Activated naive CD4-positive, alpha-beta T cell treated with anti-CD3 and anti-CD28 coated beads for 36 hours (primary cell): ENCODE measurements at regions of chr5 and their contacts with region 1.

Region 1: DNA sequence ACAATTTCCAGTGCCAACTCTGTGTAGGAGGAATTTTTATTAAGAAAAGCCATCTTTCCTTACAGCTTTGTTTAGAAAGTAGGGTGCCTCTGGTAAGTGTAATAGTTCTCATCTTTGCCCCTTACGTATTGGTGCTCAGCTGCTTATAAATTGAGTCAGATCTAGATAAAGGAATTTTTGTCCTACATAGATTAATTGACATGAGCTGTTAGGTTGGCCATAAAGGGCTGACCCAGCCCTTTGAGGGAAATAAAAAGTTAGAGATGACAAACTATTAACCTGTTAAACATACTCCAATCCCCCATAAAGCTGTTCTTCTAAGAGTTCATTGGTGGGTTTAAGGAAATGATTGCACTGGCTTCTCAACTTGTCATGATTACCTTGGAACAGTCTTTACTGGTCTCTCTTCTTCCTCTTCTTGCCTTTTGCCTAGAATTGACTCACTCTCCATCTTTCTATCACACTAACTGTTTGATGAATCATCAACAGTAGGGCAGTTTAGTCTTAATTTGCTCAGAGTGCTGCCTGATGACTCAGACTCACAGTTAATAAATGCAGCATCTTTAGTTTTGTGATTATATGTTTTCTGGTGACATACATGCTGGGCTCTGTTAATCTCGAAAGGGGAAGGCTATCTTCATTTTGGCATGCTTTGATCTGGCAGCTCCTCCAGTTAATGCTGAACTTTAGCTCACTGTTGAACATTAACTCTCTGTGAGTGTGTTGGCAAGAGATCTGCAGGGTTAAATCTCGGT is 51.7 kb downstream of the ARHGAP26 start:
- DNase-seq: peak; percentile 49
- H3K4me3 Mint-ChIP-seq: no peak overlapping the region
- H3K27ac Mint-ChIP-seq: peak overlapping the region; percentile 54
- H3K4me1 Mint-ChIP-seq: peaks cover 78% of the 10 kb centered on the region
- H3K27me3 Mint-ChIP-seq: no peaks in the 10 kb centered on the region

Region 2: DNA sequence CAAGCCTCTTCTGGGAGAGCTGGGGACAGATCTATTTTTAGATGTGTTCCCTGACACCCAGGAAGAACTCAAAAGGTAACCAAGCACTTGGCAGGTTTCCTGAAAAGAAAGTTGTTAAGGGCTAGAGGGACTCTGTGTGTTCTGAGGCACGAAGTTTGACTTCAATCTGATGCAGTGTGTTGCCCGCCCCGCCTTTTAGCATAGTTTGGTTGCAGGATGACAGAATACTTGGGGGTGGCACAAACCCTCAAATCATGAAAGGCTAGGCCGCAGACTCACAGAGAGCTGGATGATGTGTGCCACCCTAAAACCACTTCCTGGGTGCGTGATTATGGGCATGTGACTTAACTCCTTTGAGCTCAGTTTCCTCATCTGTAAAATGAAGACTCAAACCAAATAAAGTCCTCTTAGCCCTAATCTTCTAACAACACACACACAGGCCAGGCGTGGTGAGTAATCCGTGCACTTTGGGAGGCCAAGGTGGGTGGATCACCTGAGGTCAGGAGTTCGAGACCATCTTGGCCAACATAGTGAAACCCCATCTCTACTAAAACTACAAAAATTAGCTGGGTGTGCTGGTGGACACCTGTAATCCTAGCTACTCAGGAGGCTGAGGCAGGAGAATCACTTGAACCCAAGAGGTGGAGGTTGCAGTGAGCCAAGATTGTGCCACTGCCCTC is 726.1 kb before region 1 on chr5:
- CTCF ChIA-PET with region 1: no interaction called
- intact Hi-C with region 1: loop called (anchors 10 kb)
- DNase-seq: peak; percentile 95
- H3K4me3 Mint-ChIP-seq: peak overlapping the region; percentile 48
- H3K27ac Mint-ChIP-seq: peak overlapping the region; percentile 96
- H3K4me1 Mint-ChIP-seq: peaks cover 81% of the 10 kb centered on the region
- H3K27me3 Mint-ChIP-seq: no peaks in the 10 kb centered on the region

Region 3: DNA sequence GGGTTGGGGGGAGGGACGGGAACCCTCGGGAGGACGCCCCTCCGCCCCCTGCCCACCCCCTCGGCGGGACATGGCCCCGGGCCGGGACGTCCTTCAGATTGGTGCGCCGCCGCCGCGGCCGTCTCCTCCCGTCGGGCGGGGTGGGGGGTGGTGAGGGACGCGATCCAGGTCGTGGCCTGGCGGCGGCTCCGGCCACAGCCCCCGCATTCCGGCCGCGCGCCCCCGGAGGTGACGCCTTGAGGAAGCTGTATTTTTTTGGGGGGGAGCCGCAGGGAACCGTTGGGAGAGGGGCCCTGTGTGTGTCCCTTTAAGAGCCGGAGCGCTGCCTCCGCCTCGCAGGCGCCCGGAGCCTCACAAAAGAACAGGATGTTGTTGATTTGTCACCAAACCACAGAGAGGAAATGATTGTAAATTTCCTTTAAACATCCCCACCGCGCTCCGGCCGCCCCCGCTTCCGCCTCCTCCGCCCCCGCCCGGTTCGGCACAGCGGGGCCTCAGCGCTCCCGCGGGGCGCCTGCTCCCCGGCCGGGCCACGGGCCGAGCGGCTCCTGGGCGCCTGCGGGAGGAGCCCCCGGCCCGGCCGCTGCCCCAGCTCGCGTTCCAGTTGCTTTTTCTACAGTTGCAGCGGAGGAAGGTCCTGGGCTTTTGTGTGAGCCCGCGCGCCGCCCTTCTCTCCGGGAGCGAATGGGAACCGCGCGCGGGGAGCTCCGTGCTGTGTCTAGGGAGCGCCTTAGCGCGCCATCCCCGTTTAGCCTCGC is 465.0 kb before region 1 on chr5:
- CTCF ChIA-PET with region 1: no interaction called
- intact Hi-C with region 1: loop called (anchors 10 kb)
- DNase-seq: peak; percentile 93
- H3K4me3 Mint-ChIP-seq: peak overlapping the region; percentile 77
- H3K27ac Mint-ChIP-seq: peak overlapping the region; percentile 94
- H3K4me1 Mint-ChIP-seq: peaks cover 52% of the 10 kb centered on the region
- H3K27me3 Mint-ChIP-seq: no peaks in the 10 kb centered on the region

Region 4: DNA sequence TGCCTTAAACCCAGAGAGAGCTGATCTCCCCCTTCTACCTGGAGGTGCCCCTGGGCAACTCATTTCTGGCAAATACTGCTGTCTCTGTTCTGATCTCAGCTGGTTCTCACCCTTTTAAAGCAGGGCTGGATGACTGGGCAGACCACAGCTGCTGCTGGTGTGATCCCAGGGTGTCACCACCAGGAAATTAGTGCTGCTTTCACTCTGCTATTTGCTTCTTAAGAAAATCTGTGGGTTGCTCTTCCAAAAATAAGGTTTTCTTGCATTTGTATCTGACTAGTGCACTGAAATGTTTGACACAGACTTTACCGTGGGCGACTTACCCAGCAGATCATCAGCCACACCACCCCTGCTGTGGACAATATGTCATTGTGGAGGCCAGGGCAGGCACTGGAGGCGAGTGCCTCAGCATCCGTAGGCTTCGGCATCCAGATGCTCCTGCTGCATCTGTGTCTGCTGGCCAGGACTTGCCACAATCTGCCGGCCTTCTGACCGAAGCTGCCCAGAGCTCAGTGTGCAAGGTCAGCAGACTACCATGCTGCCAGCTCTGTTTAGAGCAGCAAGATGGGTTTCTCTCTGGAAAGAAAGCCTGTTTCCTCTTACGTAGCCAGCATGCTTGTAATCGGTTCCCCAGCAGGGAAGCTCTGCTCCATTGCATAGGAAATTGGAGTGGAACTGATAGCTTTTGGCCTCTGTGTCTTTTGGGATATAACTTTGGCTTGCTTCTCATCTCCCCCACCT is 38.1 kb before region 1 on chr5:
- CTCF ChIA-PET with region 1: interaction called, 4 read pairs
- intact Hi-C with region 1: loop called (anchors 1 kb)
- DNase-seq: peak; percentile 88
- H3K4me3 Mint-ChIP-seq: no peak overlapping the region
- H3K27ac Mint-ChIP-seq: peak overlapping the region; percentile 34
- H3K4me1 Mint-ChIP-seq: peaks cover 62% of the 10 kb centered on the region
- H3K27me3 Mint-ChIP-seq: no peaks in the 10 kb centered on the region

Region 5: GRCh38 chr5:142864725-142865260 is 42.9 kb after region 1 on chr5:
- CTCF ChIA-PET with region 1: interaction called, 5 read pairs
- intact Hi-C with region 1: loop called (anchors 1 kb)
- DNase-seq: no peak
- H3K4me3 Mint-ChIP-seq: no peak overlapping the region
- H3K27ac Mint-ChIP-seq: peak overlapping the region; percentile 89
- H3K4me1 Mint-ChIP-seq: peaks cover 30% of the 10 kb centered on the region
- H3K27me3 Mint-ChIP-seq: no peaks in the 10 kb centered on the region

Region 6: GRCh38 chr5:143355720-143356119 is 533.8 kb after region 1 on chr5:
- CTCF ChIA-PET with region 1: no interaction called
- intact Hi-C with region 1: loop called (anchors 10 kb)
- DNase-seq: peak; percentile 60
- H3K4me3 Mint-ChIP-seq: no peak overlapping the region
- H3K27ac Mint-ChIP-seq: no peak overlapping the region
- H3K4me1 Mint-ChIP-seq: peaks cover 71% of the 10 kb centered on the region
- H3K27me3 Mint-ChIP-seq: no peaks in the 10 kb centered on the region